Activated CD8-positive, alpha-beta memory T cell treated with anti-CD3 and anti-CD28 coated beads, Interleukin-2, amount 10 ng/mL, durations not matched to agents 7 days and 5 days (primary cell): ENCODE measurements at regions of chr1 and their contacts with region 1.

Region 1: GRCh38 chr1:36134505-36135329 is 9.7 kb upstream of the COL8A2 start:
- DNase-seq: peak; percentile 63
- ATAC-seq: peak; percentile 80
- H3K4me3 Mint-ChIP-seq: no peak overlapping the region
- H3K27ac Mint-ChIP-seq: no peak overlapping the region
- H3K4me1 Mint-ChIP-seq: peaks cover 7% of the 10 kb centered on the region
- H3K27me3 Mint-ChIP-seq: no peaks in the 10 kb centered on the region

Region 2: DNA sequence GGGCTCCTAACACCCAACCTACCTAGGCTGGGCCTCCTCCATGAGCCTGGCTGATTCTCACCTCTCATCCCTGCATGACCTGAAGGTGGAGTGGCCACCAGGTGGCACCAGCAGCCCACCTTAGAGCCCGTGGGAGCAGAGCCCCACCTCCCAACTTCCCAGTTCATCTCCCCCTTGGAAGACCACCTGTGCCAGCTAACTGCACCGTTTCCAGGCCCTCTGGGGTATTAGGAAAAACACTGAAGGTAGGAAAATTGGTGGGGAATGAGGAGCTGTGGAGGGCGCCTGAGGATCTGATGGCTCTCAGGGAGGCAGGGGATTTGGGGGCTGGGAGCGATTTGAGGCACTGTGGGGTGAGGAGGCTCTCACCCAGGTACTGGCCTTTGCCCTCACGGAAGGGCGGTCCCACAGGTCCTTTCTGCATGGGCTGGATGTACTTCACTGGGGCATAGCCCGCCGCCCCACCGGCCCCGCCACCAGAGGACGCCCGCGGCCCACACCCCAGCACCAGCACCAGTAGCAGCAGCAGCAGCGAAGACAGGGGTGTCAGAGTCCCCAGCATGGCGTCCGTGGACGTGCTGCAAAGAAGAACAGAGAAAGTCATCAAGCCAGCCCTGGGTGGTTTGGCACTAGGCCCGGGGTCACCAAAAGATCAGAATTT is 34.9 kb before region 1 on chr1:
- CTCF ChIA-PET with region 1: interaction called, 307 read pairs
- DNase-seq: peak; percentile 85
- ATAC-seq: peak; percentile 93
- H3K4me3 Mint-ChIP-seq: no peak overlapping the region
- H3K27ac Mint-ChIP-seq: no peak overlapping the region
- H3K4me1 Mint-ChIP-seq: peaks cover 4% of the 10 kb centered on the region
- H3K27me3 Mint-ChIP-seq: no peaks in the 10 kb centered on the region

Region 3: GRCh38 chr1:36109041-36109679 is 25.6 kb before region 1 on chr1:
- CTCF ChIA-PET with region 1: interaction called, 307 read pairs
- DNase-seq: peak; percentile 85
- ATAC-seq: peak; percentile 97
- H3K4me3 Mint-ChIP-seq: no peak overlapping the region
- H3K27ac Mint-ChIP-seq: peak overlapping the region; percentile 76
- H3K4me1 Mint-ChIP-seq: peaks cover 32% of the 10 kb centered on the region
- H3K27me3 Mint-ChIP-seq: no peaks in the 10 kb centered on the region

Region 4: GRCh38 chr1:36123356-36123755 is 11.4 kb before region 1 on chr1:
- CTCF ChIA-PET with region 1: interaction called, 38 read pairs
- DNase-seq: no peak
- ATAC-seq: peak; percentile 31
- H3K4me3 Mint-ChIP-seq: no peak overlapping the region
- H3K27ac Mint-ChIP-seq: no peak overlapping the region
- H3K4me1 Mint-ChIP-seq: peaks cover 8% of the 10 kb centered on the region
- H3K27me3 Mint-ChIP-seq: peaks cover 42% of the 10 kb centered on the region

Region 5: GRCh38 chr1:36178471-36179219 is 43.9 kb after region 1 on chr1:
- CTCF ChIA-PET with region 1: no interaction called
- DNase-seq: no peak
- ATAC-seq: no peak
- H3K4me3 Mint-ChIP-seq: no peak overlapping the region
- H3K27ac Mint-ChIP-seq: no peak overlapping the region
- H3K4me1 Mint-ChIP-seq: no peaks in the 10 kb centered on the region
- H3K27me3 Mint-ChIP-seq: no peaks in the 10 kb centered on the region

Region 6: DNA sequence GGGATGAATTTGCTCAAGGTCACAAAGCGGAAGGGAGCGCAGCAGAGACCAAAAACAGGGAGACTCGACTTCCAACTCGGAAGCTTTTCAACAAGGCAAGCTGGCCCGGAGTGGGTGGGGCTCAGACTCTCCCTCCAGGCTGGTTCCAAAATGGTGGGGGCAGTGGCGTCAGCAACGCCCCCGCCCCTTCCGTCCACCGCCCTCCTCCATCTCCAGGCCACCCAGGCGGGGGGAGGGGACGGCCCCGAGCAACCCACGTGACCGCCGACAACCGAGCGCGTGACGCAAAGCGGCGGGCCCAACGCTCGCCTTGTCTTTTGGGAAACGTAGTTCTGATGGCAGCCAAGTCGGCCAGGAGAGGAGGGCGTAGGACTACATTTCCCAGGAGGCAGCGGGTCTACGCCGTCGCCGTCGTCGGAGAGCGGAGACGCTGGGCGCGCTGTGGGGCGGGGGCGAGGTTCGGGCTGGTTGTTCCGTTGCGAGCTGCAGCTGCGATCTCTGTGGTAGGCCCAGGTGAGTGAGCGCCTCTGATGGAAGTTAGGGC is 89.3 kb after region 1 on chr1 and contains the start of gene THRAP3:
- CTCF ChIA-PET with region 1: interaction called, 10 read pairs
- DNase-seq: peak; percentile 100
- ATAC-seq: peak; percentile 92
- H3K4me3 Mint-ChIP-seq: peak within 1 kb of the TSS; percentile 94
- H3K27ac Mint-ChIP-seq: peak within 1 kb of the TSS; percentile 100
- H3K4me1 Mint-ChIP-seq: peaks cover 27% of the 10 kb centered on the region
- H3K27me3 Mint-ChIP-seq: no peaks in the 10 kb centered on the region
- total RNA-seq, gene THRAP3: 129 to 166 TPM